ENCODE measurements at regions of chr6 and their contacts with region 1.

Region 1: DNA sequence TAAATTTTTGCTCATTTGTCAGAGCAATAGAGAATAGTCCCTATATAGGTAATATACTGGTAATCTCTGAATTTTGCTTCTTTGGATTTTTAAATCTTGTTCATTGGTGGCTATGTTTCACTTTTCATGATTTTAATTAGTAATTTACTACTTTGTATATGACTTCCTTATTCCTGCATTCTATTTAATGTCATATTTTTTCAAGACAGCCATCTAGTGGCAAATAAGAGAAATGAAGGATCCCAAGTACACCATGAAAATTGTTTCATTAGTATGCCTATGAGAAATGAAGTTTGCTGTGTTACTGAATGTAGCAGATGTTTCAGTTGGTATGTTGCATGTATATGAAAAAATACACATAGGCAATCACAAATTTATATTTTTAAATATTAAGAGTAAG is 82.4 kb downstream of the ZNF292 start:
- DNase-seq: no peak

Region 2: GRCh38 chr6:87154993-87155841 is 82.6 kb before region 1 on chr6 and contains the start of gene ZNF292:
- intact Hi-C with region 1: loop called in 1 of 2 experiments (anchors 10 kb)
- DNase-seq: peak; percentile 99
- total RNA-seq, gene ZNF292: 46.5 to 61.2 TPM

Region 3: DNA sequence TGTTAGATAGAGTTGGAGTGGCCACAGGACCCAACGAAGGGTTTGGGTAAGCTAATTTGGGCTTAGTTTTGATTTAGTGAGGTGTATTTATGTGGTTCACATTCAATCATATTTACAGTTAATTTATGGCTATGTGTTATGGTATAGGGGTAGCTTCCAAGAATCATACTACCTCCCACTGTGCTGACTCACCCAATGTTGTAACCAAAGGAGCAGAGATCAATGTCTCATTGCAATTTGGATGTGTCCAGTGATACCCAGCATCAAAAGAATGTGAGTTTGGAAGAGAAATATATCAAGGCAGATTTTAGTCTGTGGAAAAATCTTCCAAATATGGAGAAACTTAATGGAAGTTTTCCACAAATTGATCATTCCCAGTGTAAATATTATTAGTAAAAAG is 59.3 kb after region 1 on chr6:
- intact Hi-C with region 1: no loop called
- DNase-seq: no peak